ENCODE measurements at regions of chr4 and their contacts with region 1.

Region 1: GRCh38 chr4:180028682-180029081 is 2214.5 kb upstream of the TENM3 start:
- DNase-seq: peak; percentile 69
- ATAC-seq: no peak
- H3K4me3 ChIP-seq: no peak overlapping the region
- H3K4me3 Mint-ChIP-seq: no peak overlapping the region
- H3K27ac ChIP-seq: no peak overlapping the region
- H3K27ac Mint-ChIP-seq: no peak overlapping the region
- H3K4me1 ChIP-seq: no peaks in the 10 kb centered on the region
- H3K4me1 Mint-ChIP-seq: no peaks in the 10 kb centered on the region
- H3K27me3 ChIP-seq: no peaks in the 10 kb centered on the region
- H3K27me3 Mint-ChIP-seq: no peaks in the 10 kb centered on the region
- CTCF ChIP-seq: peak; percentile 27

Region 2: DNA sequence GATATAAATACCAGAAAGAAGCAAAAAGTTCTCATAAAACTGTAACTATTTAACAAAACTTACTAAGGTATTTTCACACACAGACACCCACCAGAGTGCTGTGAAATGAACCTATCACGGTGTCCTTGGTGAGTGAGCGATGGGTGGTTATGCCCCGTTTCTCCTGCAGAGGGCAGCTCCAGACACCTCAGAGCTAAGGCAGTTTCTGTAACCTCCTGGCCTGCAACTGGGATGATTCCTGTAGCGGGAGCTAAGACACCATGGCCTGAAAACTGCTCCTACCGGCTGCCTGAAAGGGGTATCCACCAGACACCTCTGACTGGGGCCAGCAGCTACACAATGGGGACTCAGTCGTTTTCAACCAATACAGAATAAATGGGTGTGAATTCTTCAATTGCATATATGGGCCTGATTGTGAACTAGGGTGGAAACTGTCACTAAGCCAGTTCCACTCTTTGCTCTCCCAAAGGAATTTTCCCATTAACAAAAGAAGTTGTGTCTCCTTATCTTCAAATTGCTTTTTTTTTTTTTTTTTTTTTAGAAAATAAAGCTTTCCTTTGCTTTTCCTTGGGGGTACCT is 161.3 kb before region 1 on chr4:
- CTCF ChIA-PET with region 1: interaction called, 12 read pairs
- POLR2A ChIA-PET with region 1: no interaction called
- intact Hi-C with region 1: loop called (anchors 2 kb)
- DNase-seq: peak; percentile 68
- ATAC-seq: peak; percentile 49
- H3K4me3 ChIP-seq: no peak overlapping the region
- H3K4me3 Mint-ChIP-seq: no peak overlapping the region
- H3K27ac ChIP-seq: no peak overlapping the region
- H3K27ac Mint-ChIP-seq: no peak overlapping the region
- H3K4me1 ChIP-seq: no peaks in the 10 kb centered on the region
- H3K4me1 Mint-ChIP-seq: no peaks in the 10 kb centered on the region
- H3K27me3 ChIP-seq: no peaks in the 10 kb centered on the region
- H3K27me3 Mint-ChIP-seq: no peaks in the 10 kb centered on the region
- CTCF ChIP-seq: peak; percentile 58

Measured in B cell (primary cell).